ENCODE measurements at regions of chr17 and their contacts with region 1.

Region 1: GRCh38 chr17:32909787-32910369 is 18.1 kb upstream of the TMEM98 start:
- DNase-seq: peak; percentile 63

Region 2: GRCh38 chr17:32783602-32784001 is 126.3 kb before region 1 on chr17:
- CTCF ChIA-PET with region 1: interaction called, 16 read pairs
- POLR2A ChIA-PET with region 1: interaction called, 3 read pairs
- DNase-seq: peak; percentile 24

Region 3: DNA sequence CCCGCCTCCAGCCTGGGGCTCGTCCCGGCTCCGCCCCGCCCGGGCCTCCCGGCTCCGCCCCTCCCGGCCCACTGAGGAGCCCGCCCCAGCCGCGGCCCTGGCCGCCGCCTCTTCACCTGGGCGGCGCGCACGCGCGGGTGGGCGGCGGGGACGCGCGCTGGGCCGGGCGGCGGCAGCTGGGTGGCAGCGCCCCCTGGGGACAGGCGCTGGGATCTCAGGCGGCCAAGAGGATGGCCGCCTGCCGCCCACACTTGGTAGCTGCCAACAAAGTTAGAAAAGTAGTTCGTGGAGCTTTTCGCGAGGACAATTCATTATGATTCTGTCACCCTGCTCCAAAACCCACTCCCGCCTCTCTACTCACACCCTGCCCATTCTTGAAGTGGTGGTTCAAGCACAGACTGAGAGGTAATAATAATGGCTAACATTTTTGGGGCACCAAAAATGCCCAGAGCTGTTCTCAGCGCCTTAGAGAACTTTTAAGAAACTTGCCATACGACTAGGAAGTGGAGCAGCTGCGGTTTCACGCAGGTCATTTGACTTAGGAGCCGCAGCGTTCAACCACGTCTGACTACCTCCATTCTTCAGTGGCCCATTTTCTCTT is 32.6 kb before region 1 on chr17:
- CTCF ChIA-PET with region 1: interaction called, 13 read pairs
- POLR2A ChIA-PET with region 1: no interaction called
- DNase-seq: peak; percentile 86

Region 4: GRCh38 chr17:32927724-32928585 is 18.1 kb after region 1 on chr17 and contains the start of gene TMEM98:
- CTCF ChIA-PET with region 1: interaction called, 4 read pairs
- POLR2A ChIA-PET with region 1: interaction called, 12 read pairs
- DNase-seq: peak; percentile 22